Aorta (tissue), 5 donors: ENCODE measurements at regions of chr14 and their contacts with region 1.

Region 1: DNA sequence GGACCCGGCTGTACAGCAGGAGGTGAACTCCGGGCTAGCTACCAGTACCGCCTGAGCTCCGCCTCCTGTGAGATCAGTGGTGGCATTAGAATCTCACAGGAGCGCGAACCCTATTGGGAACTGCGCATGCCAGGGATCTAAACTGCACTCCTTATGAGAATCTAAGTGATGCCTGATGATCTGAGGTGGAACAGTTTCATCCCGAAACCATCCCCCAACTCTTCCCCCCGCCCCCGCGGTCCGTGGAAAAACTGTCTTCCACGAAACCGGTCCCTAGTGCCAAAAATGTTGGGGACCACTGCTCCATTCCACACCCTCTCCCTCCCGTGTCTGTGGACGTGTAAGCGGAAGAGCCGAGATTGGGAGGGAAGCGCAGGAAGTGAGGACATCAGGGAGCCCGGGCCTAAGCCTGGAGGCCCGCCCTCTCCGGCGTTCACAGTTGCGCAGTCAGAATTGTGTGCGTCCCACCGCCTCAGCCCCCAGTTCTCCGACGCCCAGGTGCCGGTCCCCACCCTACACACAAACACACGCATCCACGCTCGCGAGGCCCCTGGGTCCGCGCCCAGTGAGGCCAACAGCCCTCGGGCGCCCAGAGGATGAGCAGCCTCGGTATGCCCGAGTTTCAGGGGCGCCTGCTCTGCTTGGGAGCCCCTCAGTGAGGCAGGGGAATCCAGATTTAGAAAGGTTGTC is 1.8 kb upstream of the RNASE4 start:
- DNase-seq: peak; percentile 94 to 95
- ATAC-seq: peak; percentile 92
- H3K4me3 ChIP-seq: peak overlapping the region; percentile 56 to 96
- H3K27ac ChIP-seq: peak overlapping the region; percentile 78 to 100
- H3K4me1 ChIP-seq: peaks cover 0 to 2% of the 10 kb centered on the region in 2 donors
- H3K27me3 ChIP-seq: no peaks in the 10 kb centered on the region

Region 2: DNA sequence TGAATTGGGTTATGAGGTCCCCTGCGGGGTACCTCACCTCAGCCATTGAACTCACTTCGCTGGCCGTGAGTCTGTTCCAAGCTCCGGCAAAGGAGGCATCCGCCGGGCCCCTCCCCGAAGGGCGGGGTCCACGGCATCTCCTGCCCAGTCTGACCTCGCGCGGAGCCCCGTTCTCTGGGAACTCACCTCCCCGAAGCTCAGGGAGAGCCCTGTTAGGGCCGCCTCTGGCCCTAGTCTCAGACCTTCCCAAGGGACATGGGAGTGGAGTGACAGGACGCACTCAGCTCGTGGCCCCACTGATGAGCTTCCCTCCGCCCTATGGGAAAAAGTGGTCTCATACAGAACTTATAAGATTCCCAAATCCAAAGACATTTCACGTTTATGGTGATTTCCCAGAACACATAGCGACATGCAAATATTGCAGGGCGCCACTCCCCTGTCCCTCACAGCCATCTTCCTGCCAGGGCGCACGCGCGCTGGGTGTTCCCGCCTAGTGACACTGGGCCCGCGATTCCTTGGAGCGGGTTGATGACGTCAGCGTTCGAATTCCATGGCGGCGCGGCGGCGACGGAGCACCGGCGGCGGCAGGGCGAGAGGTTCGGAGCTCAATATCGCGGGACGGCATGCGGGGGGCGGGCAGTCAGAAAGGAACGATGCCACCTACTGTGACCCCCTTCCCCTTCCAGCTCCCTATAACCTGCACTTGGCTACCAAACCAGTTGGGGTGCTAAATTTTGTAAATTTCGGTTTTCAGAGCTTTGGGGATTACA is 339.3 kb before region 1 on chr14 and contains the start of gene PARP2:
- intact Hi-C with region 1: loop called (anchors 1 to 5 kb)
- DNase-seq: peak; percentile 98 to 99
- ATAC-seq: peak; percentile 99
- H3K4me3 ChIP-seq: peak within 1 kb of the TSS; percentile 92 to 96
- H3K27ac ChIP-seq: peak within 1 kb of the TSS; percentile 80 to 94
- H3K4me1 ChIP-seq: no peaks in the 10 kb centered on the region
- H3K27me3 ChIP-seq: no peaks in the 10 kb centered on the region
- total RNA-seq, gene PARP2: 13.4 to 19.5 TPM

Region 3: GRCh38 chr14:20461274-20462001 is 221.1 kb before region 1 on chr14 and contains the start of gene PIP4P1:
- intact Hi-C with region 1: loop called (anchors 2 to 5 kb)
- DNase-seq: peak; percentile 99
- ATAC-seq: peak; percentile 99
- H3K4me3 ChIP-seq: peak within 1 kb of the TSS; percentile 77 to 83
- H3K27ac ChIP-seq: peak within 1 kb of the TSS in 1 of 2 donors; percentile 50
- H3K4me1 ChIP-seq: no peaks in the 10 kb centered on the region
- H3K27me3 ChIP-seq: no peaks in the 10 kb centered on the region
- total RNA-seq, gene PIP4P1: 25.9 to 27.6 TPM

Region 4: GRCh38 chr14:20624495-20625070 is 58.0 kb before region 1 on chr14:
- intact Hi-C with region 1: loop called in 1 of 2 experiments (anchors 5 kb)
- DNase-seq: peak in 1 of 2 donors; percentile 80
- ATAC-seq: peak; percentile 74
- H3K4me3 ChIP-seq: peak overlapping the region in 1 of 2 donors; percentile 12
- H3K27ac ChIP-seq: peak overlapping the region in 1 of 2 donors; percentile 4
- H3K4me1 ChIP-seq: no peaks in the 10 kb centered on the region
- H3K27me3 ChIP-seq: no peaks in the 10 kb centered on the region

Region 5: GRCh38 chr14:20989572-20990551 is 307.3 kb after region 1 on chr14 and contains the start of gene METTL17:
- intact Hi-C with region 1: loop called in 1 of 2 experiments (anchors 10 kb)
- DNase-seq: peak; percentile 94 to 95
- ATAC-seq: peak; percentile 94
- H3K4me3 ChIP-seq: peak within 1 kb of the TSS; percentile 85 to 89
- H3K27ac ChIP-seq: peak within 1 kb of the TSS; percentile 91 to 99
- H3K4me1 ChIP-seq: peaks cover 3 to 10% of the 10 kb centered on the region in 2 donors
- H3K27me3 ChIP-seq: no peaks in the 10 kb centered on the region
- total RNA-seq, gene METTL17: 33.5 to 57.0 TPM